ENCODE measurements at regions of chr18 and their contacts with region 1.

Region 1: GRCh38 chr18:33761363-33761762 is 183.3 kb downstream of the ASXL3 start:
- DNase-seq: peak; percentile 12
- H3K4me3 ChIP-seq: no peak overlapping the region
- H3K27ac ChIP-seq: no peak overlapping the region
- H3K4me1 ChIP-seq: peaks cover 7% of the 10 kb centered on the region
- H3K27me3 ChIP-seq: peaks cover 2% of the 10 kb centered on the region
- CTCF ChIP-seq: peak; percentile 31 to 54

Region 2: DNA sequence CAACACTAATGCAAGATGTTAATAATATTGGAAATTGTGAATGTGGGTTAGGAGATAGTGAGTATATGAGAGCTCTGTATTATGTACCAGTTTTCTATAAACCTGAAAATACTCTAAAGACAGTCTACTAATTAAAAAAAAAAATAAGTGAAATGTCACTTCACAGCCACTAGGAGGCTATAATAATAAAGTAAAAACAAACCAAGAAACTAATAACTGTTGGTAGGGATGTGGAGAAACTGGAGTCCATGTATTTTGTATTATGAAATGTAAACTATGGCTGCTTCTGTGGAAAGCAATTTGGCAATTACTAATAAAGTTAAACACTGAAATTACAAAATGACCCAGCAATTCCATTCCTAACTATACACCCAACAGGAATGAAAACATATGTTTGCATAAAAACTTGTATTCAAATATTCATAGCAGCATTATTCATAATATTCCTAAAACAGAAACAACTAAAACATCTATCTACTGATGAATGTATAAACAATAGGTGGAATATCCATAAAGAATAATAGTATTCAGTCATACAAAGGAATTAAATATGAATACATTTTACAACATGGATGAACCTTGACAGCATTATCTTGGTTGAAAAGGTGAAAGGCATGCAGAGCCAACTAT is 357.0 kb before region 1 on chr18:
- CTCF ChIA-PET with region 1: no interaction called
- dilution Hi-C with region 1: no loop called
- in situ Hi-C with region 1: no loop called
- intact Hi-C with region 1: loop called (anchors 5 kb)
- DNase-seq: no peak
- H3K4me3 ChIP-seq: no peak overlapping the region
- H3K27ac ChIP-seq: no peak overlapping the region
- H3K4me1 ChIP-seq: no peaks in the 10 kb centered on the region
- H3K27me3 ChIP-seq: no peaks in the 10 kb centered on the region
- CTCF ChIP-seq: peak; percentile 40 to 47

Region 3: GRCh38 chr18:33532978-33533377 is 228.4 kb before region 1 on chr18:
- CTCF ChIA-PET with region 1: no interaction called
- dilution Hi-C with region 1: no loop called
- in situ Hi-C with region 1: no loop called
- intact Hi-C with region 1: no loop called
- DNase-seq: no peak
- H3K4me3 ChIP-seq: no peak overlapping the region
- H3K27ac ChIP-seq: no peak overlapping the region
- H3K4me1 ChIP-seq: no peaks in the 10 kb centered on the region
- H3K27me3 ChIP-seq: peaks cover 1% of the 10 kb centered on the region
- CTCF ChIP-seq: no peak